ENCODE measurements at regions of chr3 and their contacts with region 1.

Region 1: GRCh38 chr3:107271787-107272387 is 105.4 kb upstream of the CCDC54 start:
- DNase-seq: no peak
- ATAC-seq: peak; percentile 51
- H3K4me3 Mint-ChIP-seq: no peak overlapping the region
- H3K27ac Mint-ChIP-seq: no peak overlapping the region
- H3K4me1 Mint-ChIP-seq: peaks cover 4% of the 10 kb centered on the region
- H3K27me3 Mint-ChIP-seq: peaks cover 19% of the 10 kb centered on the region
- CTCF ChIP-seq: peak; percentile 66

Region 2: DNA sequence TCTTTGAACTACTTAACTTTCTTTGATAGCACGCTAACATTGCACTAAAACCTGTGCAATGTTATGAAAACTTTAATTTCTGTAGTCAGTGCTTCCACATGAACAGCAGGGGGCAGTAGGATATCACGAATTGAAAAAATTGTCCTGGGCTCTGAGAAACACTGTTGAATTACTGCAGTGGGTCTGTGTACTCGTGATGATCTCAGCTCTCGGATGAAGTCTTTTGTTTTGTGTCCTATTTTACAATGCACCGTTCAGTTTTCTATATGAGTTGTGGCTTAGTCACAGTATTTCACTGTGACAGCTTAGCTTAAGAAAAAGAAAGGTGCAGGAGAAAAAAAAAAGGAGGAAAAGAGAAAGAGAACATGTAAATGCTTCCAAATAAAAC is 36.0 kb before region 1 on chr3:
- CTCF ChIA-PET with region 1: interaction called, 29 read pairs
- POLR2A ChIA-PET with region 1: no interaction called
- intact Hi-C with region 1: no loop called
- DNase-seq: peak; percentile 52
- ATAC-seq: peak; percentile 71
- H3K4me3 Mint-ChIP-seq: peak overlapping the region; percentile 60
- H3K27ac Mint-ChIP-seq: no peak overlapping the region
- H3K4me1 Mint-ChIP-seq: peaks cover 13% of the 10 kb centered on the region
- H3K27me3 Mint-ChIP-seq: peaks cover 2% of the 10 kb centered on the region
- CTCF ChIP-seq: peak; percentile 94

Region 3: DNA sequence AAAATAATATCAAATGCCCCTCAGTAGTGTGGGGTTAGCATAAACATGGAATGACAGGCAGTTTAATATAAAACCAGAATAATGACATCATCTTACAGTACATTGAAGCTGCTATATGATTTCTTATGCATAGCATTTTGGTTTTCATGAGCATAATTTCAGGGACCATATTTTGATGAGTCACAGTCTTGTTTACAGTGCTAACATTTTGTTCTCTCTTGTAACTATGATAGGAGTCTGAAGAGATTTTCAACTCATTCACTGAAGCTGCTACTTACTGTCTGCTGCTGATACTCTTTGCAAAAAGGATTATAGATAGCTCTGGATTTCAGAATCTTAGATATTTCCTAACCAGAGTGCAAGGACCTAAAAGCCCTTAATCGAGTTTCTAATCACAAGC is 12.7 kb after region 1 on chr3:
- CTCF ChIA-PET with region 1: interaction called, 12 read pairs
- POLR2A ChIA-PET with region 1: interaction called, 3 read pairs
- intact Hi-C with region 1: no loop called
- DNase-seq: no peak
- ATAC-seq: no peak
- H3K4me3 Mint-ChIP-seq: no peak overlapping the region
- H3K27ac Mint-ChIP-seq: no peak overlapping the region
- H3K4me1 Mint-ChIP-seq: no peaks in the 10 kb centered on the region
- H3K27me3 Mint-ChIP-seq: peaks cover 12% of the 10 kb centered on the region
- CTCF ChIP-seq: no peak

Region 4: GRCh38 chr3:107414325-107414964 is 142.6 kb after region 1 on chr3:
- CTCF ChIA-PET with region 1: interaction called, 73 read pairs
- POLR2A ChIA-PET with region 1: no interaction called
- intact Hi-C with region 1: no loop called
- DNase-seq: no peak
- ATAC-seq: peak; percentile 91
- H3K4me3 Mint-ChIP-seq: no peak overlapping the region
- H3K27ac Mint-ChIP-seq: no peak overlapping the region
- H3K4me1 Mint-ChIP-seq: peaks cover 11% of the 10 kb centered on the region
- H3K27me3 Mint-ChIP-seq: peaks cover 2% of the 10 kb centered on the region
- CTCF ChIP-seq: no peak

Region 5: GRCh38 chr3:107421170-107421792 is 149.4 kb after region 1 on chr3:
- CTCF ChIA-PET with region 1: interaction called, 73 read pairs
- POLR2A ChIA-PET with region 1: no interaction called
- intact Hi-C with region 1: loop called (anchors 5 kb)
- DNase-seq: peak; percentile 15
- ATAC-seq: peak; percentile 77
- H3K4me3 Mint-ChIP-seq: peak overlapping the region; percentile 28
- H3K27ac Mint-ChIP-seq: no peak overlapping the region
- H3K4me1 Mint-ChIP-seq: peaks cover 2% of the 10 kb centered on the region
- H3K27me3 Mint-ChIP-seq: peaks cover 6% of the 10 kb centered on the region
- CTCF ChIP-seq: peak; percentile 76

Region 6: GRCh38 chr3:107429320-107430181 is 157.7 kb after region 1 on chr3:
- CTCF ChIA-PET with region 1: interaction called, 56 read pairs
- POLR2A ChIA-PET with region 1: no interaction called
- intact Hi-C with region 1: loop called (anchors 5 kb)
- DNase-seq: peak; percentile 62
- ATAC-seq: peak; percentile 70
- H3K4me3 Mint-ChIP-seq: peak overlapping the region; percentile 73
- H3K27ac Mint-ChIP-seq: no peak overlapping the region
- H3K4me1 Mint-ChIP-seq: peaks cover 20% of the 10 kb centered on the region
- H3K27me3 Mint-ChIP-seq: peaks cover 14% of the 10 kb centered on the region
- CTCF ChIP-seq: peak; percentile 82

Region 7: GRCh38 chr3:107512108-107512507 is 240.2 kb after region 1 on chr3:
- CTCF ChIA-PET with region 1: interaction called, 13 read pairs
- POLR2A ChIA-PET with region 1: no interaction called
- intact Hi-C with region 1: no loop called
- DNase-seq: no peak
- ATAC-seq: no peak
- H3K4me3 Mint-ChIP-seq: no peak overlapping the region
- H3K27ac Mint-ChIP-seq: no peak overlapping the region
- H3K4me1 Mint-ChIP-seq: no peaks in the 10 kb centered on the region
- H3K27me3 Mint-ChIP-seq: peaks cover 6% of the 10 kb centered on the region
- CTCF ChIP-seq: no peak